Heart left ventricle (tissue), 16 donors: ENCODE measurements at regions of chr1 and their contacts with region 1.

Region 1: GRCh38 chr1:185595835-185596667 is 138.1 kb upstream of the HMCN1 start:
- DNase-seq: peak in 1 of 5 donors; percentile 26
- ATAC-seq: peak in 3 of 4 donors; percentile 21 to 61 (median 48)
- H3K4me3 ChIP-seq: no peak overlapping the region
- H3K27ac ChIP-seq: peak overlapping the region in 8 of 12 donors; percentile 30 to 88 (median 68)
- H3K4me1 ChIP-seq: peaks cover 0 to 38% (median 21%) of the 10 kb centered on the region in 12 donors
- H3K27me3 ChIP-seq: no peaks in the 10 kb centered on the region
- CTCF ChIP-seq: peak; percentile 17 to 59 (median 42)
- POLR2A ChIP-seq: no peak

Region 2: GRCh38 chr1:185317034-185317885 is 278.8 kb before region 1 on chr1 and contains the start of gene IVNS1ABP:
- intact Hi-C with region 1: loop called in 5 of 10 experiments (anchors 1 to 10 kb)
- DNase-seq: peak; percentile 95 to 98 (median 96)
- ATAC-seq: peak; percentile 90 to 94 (median 92)
- H3K4me3 ChIP-seq: peak within 1 kb of the TSS; percentile 66 to 99 (median 90)
- H3K27ac ChIP-seq: peak within 1 kb of the TSS; percentile 87 to 99 (median 96)
- H3K4me1 ChIP-seq: peaks cover 0 to 51% (median 32%) of the 10 kb centered on the region in 12 donors
- H3K27me3 ChIP-seq: no peaks in the 10 kb centered on the region
- CTCF ChIP-seq: peak in 3 of 12 donors; percentile 10 to 37 (median 12)
- POLR2A ChIP-seq: peak; percentile 87 to 97
- total RNA-seq, gene IVNS1ABP: 24.7 to 95.2 (median 60.6) TPM

Region 3: GRCh38 chr1:185495007-185495406 is 101.0 kb before region 1 on chr1:
- intact Hi-C with region 1: no loop called
- DNase-seq: no peak
- ATAC-seq: no peak
- H3K4me3 ChIP-seq: no peak overlapping the region
- H3K27ac ChIP-seq: peak overlapping the region in 1 of 12 donors; percentile 17
- H3K4me1 ChIP-seq: peaks cover 0 to 9% (median 0%) of the 10 kb centered on the region in 12 donors
- H3K27me3 ChIP-seq: no peaks in the 10 kb centered on the region
- CTCF ChIP-seq: no peak
- POLR2A ChIP-seq: no peak

Region 4: GRCh38 chr1:185566995-185567394 is 29.1 kb before region 1 on chr1:
- intact Hi-C with region 1: loop called in 1 of 10 experiments (anchors 2 kb)
- DNase-seq: no peak
- ATAC-seq: no peak
- H3K4me3 ChIP-seq: no peak overlapping the region
- H3K27ac ChIP-seq: peak overlapping the region in 1 of 12 donors; percentile 56
- H3K4me1 ChIP-seq: peaks cover 0 to 32% (median 5%) of the 10 kb centered on the region in 12 donors
- H3K27me3 ChIP-seq: no peaks in the 10 kb centered on the region
- CTCF ChIP-seq: no peak
- POLR2A ChIP-seq: no peak

Region 5: GRCh38 chr1:185652348-185652747 is 56.3 kb after region 1 on chr1:
- intact Hi-C with region 1: loop called in 5 of 10 experiments (anchors 5 to 10 kb)
- DNase-seq: no peak
- ATAC-seq: no peak
- H3K4me3 ChIP-seq: no peak overlapping the region
- H3K27ac ChIP-seq: no peak overlapping the region
- H3K4me1 ChIP-seq: peaks cover 0 to 16% (median under 1%) of the 10 kb centered on the region in 12 donors
- H3K27me3 ChIP-seq: no peaks in the 10 kb centered on the region
- CTCF ChIP-seq: no peak
- POLR2A ChIP-seq: no peak

Region 6: DNA sequence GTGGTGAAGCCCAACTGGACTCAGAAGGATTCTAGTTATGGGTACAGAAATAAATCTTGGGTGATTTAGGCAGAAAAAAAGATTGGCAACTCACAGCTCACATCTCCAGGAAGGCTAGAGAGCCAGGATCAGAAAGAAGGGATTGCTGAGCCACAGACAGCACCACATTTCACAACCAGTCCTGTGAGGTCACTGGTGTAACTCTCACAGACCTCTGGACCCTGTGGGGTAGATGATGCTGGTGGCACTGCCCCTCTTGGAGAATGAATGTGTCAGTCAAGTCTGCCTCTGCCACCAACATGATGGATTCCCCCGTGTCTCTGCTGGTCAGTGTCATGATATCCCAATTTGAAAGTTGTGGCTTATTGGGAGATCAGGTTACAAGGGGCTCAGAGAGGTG is 67.3 kb after region 1 on chr1:
- intact Hi-C with region 1: loop called in 6 of 10 experiments (anchors 5 to 10 kb)
- DNase-seq: no peak
- ATAC-seq: no peak
- H3K4me3 ChIP-seq: no peak overlapping the region
- H3K27ac ChIP-seq: no peak overlapping the region
- H3K4me1 ChIP-seq: peaks cover 0 to 12% (median 2%) of the 10 kb centered on the region in 12 donors
- H3K27me3 ChIP-seq: no peaks in the 10 kb centered on the region
- CTCF ChIP-seq: no peak
- POLR2A ChIP-seq: no peak

Region 7: DNA sequence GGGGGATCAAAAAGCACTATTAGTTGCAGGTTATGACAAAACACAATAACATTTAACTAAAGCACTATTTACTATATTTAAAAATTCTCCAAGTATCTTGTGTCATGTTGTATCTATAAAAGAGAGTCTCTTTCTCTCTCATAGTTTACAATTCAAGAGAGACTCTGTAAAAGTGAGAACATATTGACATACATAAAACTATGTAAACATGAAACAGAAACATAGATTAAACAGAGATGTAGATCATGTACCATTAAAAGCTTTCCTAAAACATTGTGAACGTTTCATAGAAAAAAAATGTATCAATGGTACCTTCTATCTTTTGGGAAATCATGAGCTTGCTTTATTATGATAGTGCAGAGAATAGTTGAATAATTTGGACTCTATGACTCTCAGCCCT is 109.7 kb after region 1 on chr1:
- intact Hi-C with region 1: no loop called
- DNase-seq: no peak
- ATAC-seq: no peak
- H3K4me3 ChIP-seq: no peak overlapping the region
- H3K27ac ChIP-seq: no peak overlapping the region
- H3K4me1 ChIP-seq: no peaks in the 10 kb centered on the region
- H3K27me3 ChIP-seq: no peaks in the 10 kb centered on the region
- CTCF ChIP-seq: no peak
- POLR2A ChIP-seq: no peak